Ascending aorta (tissue), 2 donors: ENCODE measurements at regions of chr16 and their contacts with region 1.

Region 1: GRCh38 chr16:15650019-15650697 is at the start of gene NDE1:
- DNase-seq: peak; percentile 61 to 95
- H3K4me3 ChIP-seq: peak within 1 kb of the TSS; percentile 68 to 71
- H3K27ac ChIP-seq: peak within 1 kb of the TSS; percentile 83 to 85
- H3K4me1 ChIP-seq: peaks cover 0 to 6% of the 10 kb centered on the region in 2 donors
- H3K27me3 ChIP-seq: no peaks in the 10 kb centered on the region
- CTCF ChIP-seq: no peak
- total RNA-seq, gene NDE1: 21.9 TPM

Region 2: GRCh38 chr16:15672514-15673167 is 22.5 kb after region 1 on chr16:
- intact Hi-C with region 1: loop called (anchors 2 kb)
- DNase-seq: peak; percentile 91 to 97
- H3K4me3 ChIP-seq: peak overlapping the region; percentile 31 to 33
- H3K27ac ChIP-seq: peak overlapping the region; percentile 78 to 92
- H3K4me1 ChIP-seq: peaks cover 6 to 9% of the 10 kb centered on the region in 2 donors
- H3K27me3 ChIP-seq: no peaks in the 10 kb centered on the region
- CTCF ChIP-seq: no peak

Region 3: GRCh38 chr16:15704545-15704987 is 54.4 kb after region 1 on chr16:
- intact Hi-C with region 1: loop called (anchors 1 kb)
- DNase-seq: peak in 1 of 2 donors; percentile 89
- H3K4me3 ChIP-seq: no peak overlapping the region
- H3K27ac ChIP-seq: peak overlapping the region; percentile 7 to 53
- H3K4me1 ChIP-seq: no peaks in the 10 kb centered on the region
- H3K27me3 ChIP-seq: no peaks in the 10 kb centered on the region
- CTCF ChIP-seq: peak; percentile 59 to 67 (median 67)